ENCODE measurements at regions of chr3 and their contacts with region 1.

Region 1: GRCh38 chr3:167929968-167930367 is 165.8 kb downstream of the GOLIM4 start:
- DNase-seq: no peak
- H3K4me3 ChIP-seq: no peak overlapping the region
- H3K4me3 Mint-ChIP-seq: no peak overlapping the region
- H3K27ac Mint-ChIP-seq: no peak overlapping the region
- H3K4me1 ChIP-seq: no peaks in the 10 kb centered on the region
- H3K4me1 Mint-ChIP-seq: no peaks in the 10 kb centered on the region
- H3K27me3 ChIP-seq: no peaks in the 10 kb centered on the region
- H3K27me3 Mint-ChIP-seq: peaks cover 3% of the 10 kb centered on the region
- CTCF ChIP-seq: no peak

Region 2: DNA sequence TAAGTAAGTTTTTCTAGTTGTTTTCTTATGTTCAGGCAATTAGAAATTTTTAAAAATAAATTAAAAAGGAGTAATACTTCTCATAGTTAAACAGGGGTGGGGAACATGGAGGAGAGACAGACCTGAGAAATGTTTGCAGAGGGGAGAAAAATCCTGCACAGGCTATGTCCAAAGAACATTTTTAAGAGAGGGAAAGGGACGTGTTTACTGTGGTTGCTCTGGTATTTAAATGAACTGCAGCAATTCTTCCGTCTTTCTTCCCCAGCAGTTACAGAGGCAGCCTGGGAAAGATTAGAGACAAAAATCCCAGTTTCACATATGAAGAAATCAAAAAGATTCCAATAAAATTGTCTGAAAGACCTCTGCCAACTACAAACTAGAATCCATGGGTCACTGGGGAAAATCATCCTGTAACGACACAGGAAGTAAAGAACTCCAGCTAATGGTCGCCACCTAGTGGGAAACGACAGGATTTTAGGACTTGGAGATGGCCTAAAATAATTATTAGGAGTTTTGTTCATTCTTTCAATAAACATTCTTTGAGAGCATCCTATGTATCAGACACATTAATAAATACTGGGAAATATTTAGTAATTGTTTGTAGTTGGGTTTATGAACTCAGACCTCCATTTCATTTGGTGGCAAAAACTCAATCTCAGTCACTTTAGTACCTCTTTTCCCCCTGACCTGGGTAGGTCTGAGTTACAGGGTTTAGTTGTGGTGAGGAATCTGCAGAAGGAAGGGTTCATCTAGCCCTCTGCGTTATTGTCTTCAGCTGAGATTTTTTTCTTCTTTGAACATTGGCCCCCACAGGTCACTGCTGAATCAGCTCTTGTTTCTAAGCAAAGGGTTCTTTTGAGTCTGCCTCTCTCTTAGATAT is 235.7 kb after region 1 on chr3:
- CTCF ChIA-PET with region 1: no interaction called
- POLR2A ChIA-PET with region 1: no interaction called
- intact Hi-C with region 1: loop called (anchors 10 kb)
- DNase-seq: peak; percentile 53 to 55
- H3K4me3 ChIP-seq: no peak overlapping the region
- H3K4me3 Mint-ChIP-seq: no peak overlapping the region
- H3K27ac Mint-ChIP-seq: no peak overlapping the region
- H3K4me1 ChIP-seq: no peaks in the 10 kb centered on the region
- H3K4me1 Mint-ChIP-seq: no peaks in the 10 kb centered on the region
- H3K27me3 ChIP-seq: no peaks in the 10 kb centered on the region
- H3K27me3 Mint-ChIP-seq: no peaks in the 10 kb centered on the region
- CTCF ChIP-seq: peak; percentile 68 to 73